ENCODE measurements at regions of chr22 and their contacts with region 1.

Region 1: GRCh38 chr22:37284805-37285355 is 2.6 kb downstream of the CYTH4 start:
- H3K4me3 Mint-ChIP-seq: peak overlapping the region; percentile 99
- H3K27ac Mint-ChIP-seq: peak overlapping the region; percentile 93
- H3K4me1 Mint-ChIP-seq: peaks cover 87% of the 10 kb centered on the region
- H3K27me3 Mint-ChIP-seq: no peaks in the 10 kb centered on the region

Region 2: DNA sequence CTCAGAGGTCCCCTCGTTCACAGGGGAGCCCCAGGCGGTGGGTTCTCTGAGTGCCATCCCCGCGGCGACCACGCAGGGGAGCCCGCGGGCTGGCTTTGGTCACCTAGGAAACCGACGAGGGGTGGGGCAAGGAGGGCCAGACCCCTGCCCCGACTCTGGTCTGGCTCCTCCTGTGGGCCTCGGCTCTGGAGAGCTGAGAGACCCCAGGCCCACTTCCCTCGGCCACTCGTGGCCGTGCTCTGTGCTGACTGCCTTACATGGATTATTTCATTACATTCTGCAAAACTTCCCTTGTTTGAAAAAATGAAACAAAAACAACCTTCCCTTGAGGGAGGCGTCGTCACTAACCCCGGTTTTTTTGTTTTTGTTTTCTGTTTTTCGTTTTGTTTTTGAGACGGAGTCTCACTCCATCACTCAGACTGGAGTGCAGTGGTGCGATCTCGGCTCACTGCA is 17.7 kb before region 1 on chr22:
- intact Hi-C with region 1: loop called (anchors 1 kb)
- H3K4me3 Mint-ChIP-seq: peak overlapping the region; percentile 70
- H3K27ac Mint-ChIP-seq: peak overlapping the region; percentile 91
- H3K4me1 Mint-ChIP-seq: peaks cover 61% of the 10 kb centered on the region
- H3K27me3 Mint-ChIP-seq: peaks cover 9% of the 10 kb centered on the region